Esophagus squamous epithelium (tissue), 5 donors: ENCODE measurements at regions of chr1 and their contacts with region 1.

Region 1: DNA sequence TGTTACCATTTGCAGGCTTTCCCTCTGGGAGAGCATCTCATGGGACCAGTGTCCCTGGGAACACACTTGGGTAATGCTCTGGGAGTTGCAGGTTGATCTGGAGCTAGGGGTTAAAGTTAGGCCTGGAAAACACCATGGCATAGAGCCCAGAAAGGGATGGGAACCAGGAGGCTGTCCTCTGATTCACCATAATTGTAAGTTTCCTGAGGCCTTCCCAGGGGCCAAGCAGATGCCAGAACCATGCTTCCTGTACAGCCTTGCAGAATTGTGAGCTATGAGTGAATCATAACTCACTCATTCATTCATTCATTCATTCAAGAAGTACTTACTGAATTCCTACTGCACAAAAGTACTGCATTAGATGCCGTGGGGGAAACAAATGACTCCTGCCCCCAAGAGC is 50.0 kb downstream of the LACTBL1 start:
- DNase-seq: no peak
- H3K4me3 ChIP-seq: no peak overlapping the region
- H3K27ac ChIP-seq: no peak overlapping the region
- H3K4me1 ChIP-seq: peaks cover 0 to 15% (median 3%) of the 10 kb centered on the region in 3 donors
- H3K27me3 ChIP-seq: peaks cover 0 to 57% (median 0%) of the 10 kb centered on the region in 4 donors
- CTCF ChIP-seq: no peak
- POLR2A ChIP-seq: no peak

Region 2: GRCh38 chr1:22296701-22297591 is 625.7 kb before region 1 on chr1:
- intact Hi-C with region 1: no loop called
- DNase-seq: no peak
- H3K4me3 ChIP-seq: no peak overlapping the region
- H3K27ac ChIP-seq: peak overlapping the region in 1 of 4 donors; percentile 10
- H3K4me1 ChIP-seq: peaks cover 0 to 12% (median 4%) of the 10 kb centered on the region in 3 donors
- H3K27me3 ChIP-seq: peaks cover 0 to 32% (median 0%) of the 10 kb centered on the region in 4 donors
- CTCF ChIP-seq: no peak
- POLR2A ChIP-seq: no peak

Region 3: GRCh38 chr1:22673486-22674409 is 248.9 kb before region 1 on chr1:
- intact Hi-C with region 1: loop called (anchors 10 kb)
- DNase-seq: no peak
- H3K4me3 ChIP-seq: no peak overlapping the region
- H3K27ac ChIP-seq: no peak overlapping the region
- H3K4me1 ChIP-seq: no peaks in the 10 kb centered on the region
- H3K27me3 ChIP-seq: peaks cover 0 to 91% (median 0%) of the 10 kb centered on the region in 4 donors
- CTCF ChIP-seq: peak in 5 of 6 experiments; percentile 53 to 75 (median 58)
- POLR2A ChIP-seq: no peak

Region 4: DNA sequence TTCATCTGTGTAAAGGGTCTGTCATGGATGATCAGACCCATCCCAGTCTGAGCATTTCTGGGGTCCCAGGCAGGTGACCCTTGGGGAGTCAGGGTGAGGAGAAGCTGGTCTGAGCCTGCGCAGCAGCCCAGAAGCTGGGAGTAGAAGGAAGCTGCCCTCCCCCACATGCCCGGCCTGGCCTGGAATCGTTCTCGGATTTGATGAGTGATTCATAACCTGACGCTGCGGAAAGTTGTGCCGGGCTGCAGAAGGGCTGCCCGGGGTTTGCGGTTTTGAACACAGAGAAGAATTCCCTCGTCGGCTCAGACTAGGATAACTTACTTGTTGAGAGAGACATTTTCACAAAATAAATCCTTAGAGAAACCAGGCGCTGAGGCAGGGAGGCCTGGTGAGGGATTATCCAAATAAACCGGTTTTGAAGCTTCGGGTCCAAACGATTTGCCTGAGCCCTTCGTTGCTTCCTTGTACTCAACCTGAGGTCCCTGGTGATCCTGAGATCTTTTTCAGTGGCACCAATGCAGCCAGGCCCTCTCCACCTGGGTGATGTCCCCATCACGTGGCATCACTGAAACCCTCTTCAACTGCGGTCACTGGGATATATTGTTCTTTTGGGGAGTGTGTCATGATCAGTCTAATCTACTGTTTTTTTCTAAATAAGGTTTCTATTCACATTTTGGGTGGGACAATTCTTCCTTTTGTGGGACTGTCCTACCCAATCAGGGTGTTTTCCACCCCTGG is 182.8 kb before region 1 on chr1:
- intact Hi-C with region 1: no loop called
- DNase-seq: no peak
- H3K4me3 ChIP-seq: no peak overlapping the region
- H3K27ac ChIP-seq: no peak overlapping the region
- H3K4me1 ChIP-seq: no peaks in the 10 kb centered on the region
- H3K27me3 ChIP-seq: peaks cover 0 to 39% (median 0%) of the 10 kb centered on the region in 4 donors
- CTCF ChIP-seq: no peak
- POLR2A ChIP-seq: no peak

Region 5: GRCh38 chr1:22876359-22877111 is 46.1 kb before region 1 on chr1:
- intact Hi-C with region 1: no loop called
- DNase-seq: no peak
- H3K4me3 ChIP-seq: no peak overlapping the region
- H3K27ac ChIP-seq: no peak overlapping the region
- H3K4me1 ChIP-seq: peaks cover 0 to 70% (median 28%) of the 10 kb centered on the region in 3 donors
- H3K27me3 ChIP-seq: peaks cover 0 to 42% (median 0%) of the 10 kb centered on the region in 4 donors
- CTCF ChIP-seq: no peak
- POLR2A ChIP-seq: no peak

Region 6: DNA sequence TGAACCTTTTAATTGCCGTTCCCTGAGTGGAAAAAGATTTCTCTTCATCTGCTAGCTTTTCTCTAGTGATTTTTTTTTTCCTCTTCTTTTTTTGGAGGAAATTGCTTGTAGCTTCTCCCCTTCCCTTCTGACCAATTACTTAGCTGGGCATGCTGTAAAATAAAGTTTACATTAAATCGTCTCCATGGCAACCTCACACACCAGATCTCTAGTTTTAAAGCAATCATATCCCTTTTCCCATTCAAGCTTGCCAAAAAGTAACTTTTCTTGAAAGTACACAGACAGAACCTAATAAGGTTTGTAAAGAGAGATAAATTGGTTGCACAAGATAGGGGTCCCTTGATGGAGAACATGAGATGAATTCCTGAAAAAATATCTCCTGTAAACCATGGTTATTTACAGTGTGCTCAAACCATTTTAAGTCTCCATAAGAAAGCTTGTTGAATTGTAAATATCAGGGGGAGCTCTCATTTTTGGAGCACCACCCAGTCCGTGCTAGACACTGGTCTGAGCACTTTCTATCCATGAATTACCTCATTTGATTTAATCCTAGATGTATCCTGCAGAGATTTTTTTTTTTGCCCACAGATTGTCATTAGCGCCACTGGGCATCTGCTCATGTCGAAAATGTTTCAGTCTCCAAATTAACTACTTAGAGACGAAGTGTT is 327.3 kb after region 1 on chr1:
- intact Hi-C with region 1: no loop called
- DNase-seq: no peak
- H3K4me3 ChIP-seq: no peak overlapping the region
- H3K27ac ChIP-seq: no peak overlapping the region
- H3K4me1 ChIP-seq: no peaks in the 10 kb centered on the region
- H3K27me3 ChIP-seq: peaks cover 0 to 36% (median 0%) of the 10 kb centered on the region in 4 donors
- CTCF ChIP-seq: no peak
- POLR2A ChIP-seq: no peak